OCI-LY7 (cell line): ENCODE measurements at regions of chr2 and their contacts with region 1.

Region 1: DNA sequence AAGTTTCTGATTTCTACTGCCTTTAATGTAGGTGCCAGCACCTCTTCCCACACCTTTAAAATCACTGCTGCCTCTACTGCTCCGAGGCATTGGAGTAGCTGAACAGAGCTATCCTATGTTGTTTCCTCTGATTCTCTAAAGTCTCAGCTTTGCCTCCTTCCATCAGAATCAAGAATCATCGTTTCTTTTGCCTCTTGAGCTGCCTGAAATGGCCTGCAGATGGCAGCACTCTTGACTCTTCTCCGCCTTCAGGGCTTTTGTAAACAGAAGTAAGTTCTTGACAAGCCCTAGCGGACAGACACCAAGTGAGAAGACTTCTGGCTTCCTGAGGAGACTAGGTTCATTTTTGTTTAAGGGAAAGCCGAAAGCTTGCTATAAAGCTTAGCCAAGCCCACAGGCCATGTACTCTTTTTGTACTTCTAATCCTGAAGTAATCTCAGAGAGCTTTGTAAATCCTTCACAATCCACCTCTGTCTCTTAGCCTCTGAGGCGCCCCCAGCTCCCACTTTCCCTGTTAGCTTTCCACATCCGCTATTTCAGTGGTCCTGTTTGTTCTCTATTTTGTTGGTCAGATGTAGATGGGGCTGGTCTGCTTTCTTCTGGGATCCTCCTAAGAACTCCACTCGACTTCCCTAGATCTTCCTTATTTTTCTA is 48.4 kb downstream of the GTF3C3 start:
- DNase-seq: peak; percentile 68
- H3K4me3 ChIP-seq: no peak overlapping the region
- H3K27ac ChIP-seq: no peak overlapping the region
- H3K4me1 ChIP-seq: peaks cover 8% of the 10 kb centered on the region
- CTCF ChIP-seq: peak; percentile 92

Region 2: DNA sequence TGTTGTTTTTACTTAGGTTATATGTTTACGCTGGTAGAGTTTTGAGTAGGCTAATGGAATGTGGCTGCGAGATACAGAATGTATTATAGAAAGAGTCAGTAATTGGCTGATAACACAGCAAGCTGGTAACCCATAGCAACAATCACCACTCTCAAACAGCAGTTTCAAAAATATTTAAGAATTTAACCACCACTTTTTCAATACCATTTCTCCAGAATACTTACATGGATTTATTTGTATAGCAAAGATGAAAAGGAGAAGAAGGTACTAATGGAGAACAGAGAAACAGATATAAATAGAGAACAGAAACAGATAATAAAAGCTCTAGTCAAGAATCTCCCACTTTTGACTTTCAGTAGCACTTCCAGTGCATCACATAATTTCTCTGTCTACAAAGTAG is 1282.3 kb before region 1 on chr2:
- CTCF ChIA-PET with region 1: no interaction called
- POLR2A ChIA-PET with region 1: no interaction called
- intact Hi-C with region 1: no loop called
- DNase-seq: no peak
- H3K4me3 ChIP-seq: no peak overlapping the region
- H3K27ac ChIP-seq: no peak overlapping the region
- H3K4me1 ChIP-seq: peaks cover 44% of the 10 kb centered on the region
- CTCF ChIP-seq: no peak

Region 3: DNA sequence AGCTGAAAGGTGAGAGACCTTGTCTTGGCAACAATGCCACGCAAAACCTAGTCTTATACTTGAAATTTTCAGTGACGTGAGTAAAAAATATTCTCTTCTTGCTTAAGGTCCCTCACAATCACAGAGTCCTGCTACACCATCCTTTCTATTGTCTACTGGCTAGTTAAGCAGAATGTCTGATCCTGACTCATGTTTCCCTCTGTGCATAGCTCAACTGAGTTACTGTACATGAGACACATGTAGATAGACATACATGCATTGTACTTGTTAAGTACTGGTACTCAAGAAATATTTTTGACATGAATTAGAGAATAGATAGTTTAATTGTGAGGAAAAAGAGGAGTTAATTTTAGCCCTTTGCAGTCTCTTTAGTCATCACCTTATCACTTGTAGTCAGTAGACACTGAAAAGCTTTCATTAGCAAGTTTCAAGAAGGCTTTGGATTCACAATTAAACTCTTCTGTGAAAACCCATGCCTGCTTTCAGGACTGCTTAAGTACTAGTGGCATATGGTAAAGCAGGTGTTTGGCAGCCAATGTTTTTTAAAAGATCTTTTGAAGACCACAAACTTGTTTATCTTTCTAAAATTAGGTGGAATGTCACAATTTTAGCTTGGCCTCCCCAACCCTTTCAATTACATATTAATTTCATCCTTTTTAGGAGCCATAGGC is 270.3 kb before region 1 on chr2:
- CTCF ChIA-PET with region 1: no interaction called
- POLR2A ChIA-PET with region 1: interaction called, 12 read pairs
- intact Hi-C with region 1: no loop called
- DNase-seq: no peak
- H3K4me3 ChIP-seq: no peak overlapping the region
- H3K27ac ChIP-seq: no peak overlapping the region
- H3K4me1 ChIP-seq: no peaks in the 10 kb centered on the region
- CTCF ChIP-seq: no peak

Region 4: GRCh38 chr2:197777823-197778407 is 1026.8 kb after region 1 on chr2:
- CTCF ChIA-PET with region 1: no interaction called
- POLR2A ChIA-PET with region 1: no interaction called
- intact Hi-C with region 1: loop called (anchors 5 kb)
- DNase-seq: peak; percentile 47
- H3K4me3 ChIP-seq: no peak overlapping the region
- H3K27ac ChIP-seq: no peak overlapping the region
- H3K4me1 ChIP-seq: no peaks in the 10 kb centered on the region
- CTCF ChIP-seq: peak; percentile 98